GM13976 (cell line): ENCODE measurements at regions of chr1 and their contacts with region 1.

Region 1: DNA sequence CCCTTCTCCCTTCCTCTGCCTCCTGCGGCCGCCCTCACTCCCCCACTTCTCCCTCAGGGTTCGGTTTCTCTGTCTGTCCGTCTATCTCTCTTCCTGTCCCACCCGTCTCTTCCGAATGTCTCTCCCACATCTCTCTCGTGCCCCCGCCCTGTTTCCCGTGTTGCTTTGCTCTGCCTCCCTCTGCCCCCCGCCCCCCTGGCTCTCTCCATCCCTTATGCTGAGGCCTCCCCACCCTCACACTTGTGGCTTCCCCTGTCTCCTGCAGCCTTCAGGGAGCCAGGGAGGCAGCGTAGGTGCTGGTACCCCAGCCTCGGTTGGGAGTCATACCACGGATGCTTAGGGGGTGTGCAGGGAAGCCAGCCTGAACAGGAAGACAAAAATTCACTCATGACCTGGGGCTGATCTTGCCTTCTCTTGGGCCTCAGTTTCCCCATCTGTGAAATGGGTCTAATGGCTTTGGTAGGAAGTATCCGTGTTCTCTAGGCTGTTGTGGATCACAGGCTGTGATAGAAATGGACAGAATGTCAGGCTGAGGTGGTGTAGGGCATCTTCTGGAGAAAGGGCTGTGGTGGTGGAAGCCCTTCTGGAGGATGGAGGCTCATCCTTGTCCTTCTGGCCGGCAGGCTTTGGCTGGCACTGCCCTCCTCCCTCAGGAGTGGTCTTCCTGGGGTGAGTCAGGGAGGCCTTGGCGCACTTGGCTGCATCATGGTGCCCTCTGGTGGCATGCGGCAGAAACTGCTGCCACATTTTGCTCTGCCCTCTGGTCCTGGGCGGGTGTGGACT is 55.5 kb downstream of the FOXO6 start:
- DNase-seq: peak; percentile 88
- CTCF ChIP-seq: peak; percentile 93

Region 2: DNA sequence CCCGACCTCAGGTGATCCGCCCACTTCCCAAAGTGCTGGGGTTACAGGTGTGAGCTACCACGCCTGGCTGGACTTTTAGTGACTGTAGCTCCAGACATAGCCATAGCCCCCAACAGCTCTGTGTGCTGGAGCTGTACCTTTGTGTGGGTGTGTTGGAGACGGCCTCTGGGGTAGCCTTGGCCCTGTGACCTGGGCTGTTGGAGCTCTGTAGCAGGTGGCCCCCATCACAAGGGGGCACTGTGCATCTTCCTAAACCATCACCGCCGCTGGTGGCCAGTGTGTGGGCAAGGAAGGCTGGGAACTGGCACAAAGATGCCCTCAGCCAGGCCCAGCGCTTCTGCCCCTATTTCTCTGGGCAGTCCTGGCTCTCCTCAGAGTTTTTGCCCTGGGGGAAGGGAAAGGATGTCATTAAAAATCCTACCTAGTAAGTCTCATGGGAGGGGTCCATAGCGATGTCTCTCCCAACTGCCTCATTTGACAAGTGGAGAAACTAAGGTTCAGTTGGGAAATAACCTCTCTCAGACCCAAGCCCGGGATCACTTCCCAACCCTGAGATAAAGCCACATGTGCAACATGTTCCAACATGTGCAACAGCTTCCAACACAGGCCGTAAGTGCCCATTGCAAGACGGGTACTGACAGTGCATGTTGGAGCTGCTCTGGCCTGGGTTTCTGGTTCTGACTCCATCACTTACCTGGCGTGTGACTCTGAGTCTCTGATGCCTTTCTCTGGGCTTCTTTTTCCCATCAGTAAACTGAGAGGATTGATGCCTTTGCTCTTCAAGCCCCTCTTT is 93.7 kb before region 1 on chr1:
- in situ Hi-C with region 1: loop called (anchors 10 kb)
- DNase-seq: peak; percentile 83
- CTCF ChIP-seq: peak; percentile 73

Region 3: GRCh38 chr1:41666981-41667631 is 250.4 kb after region 1 on chr1:
- in situ Hi-C with region 1: no loop called
- DNase-seq: peak; percentile 80
- CTCF ChIP-seq: no peak